A673 (cell line): ENCODE measurements at regions of chr16 and their contacts with region 1.

Region 1: DNA sequence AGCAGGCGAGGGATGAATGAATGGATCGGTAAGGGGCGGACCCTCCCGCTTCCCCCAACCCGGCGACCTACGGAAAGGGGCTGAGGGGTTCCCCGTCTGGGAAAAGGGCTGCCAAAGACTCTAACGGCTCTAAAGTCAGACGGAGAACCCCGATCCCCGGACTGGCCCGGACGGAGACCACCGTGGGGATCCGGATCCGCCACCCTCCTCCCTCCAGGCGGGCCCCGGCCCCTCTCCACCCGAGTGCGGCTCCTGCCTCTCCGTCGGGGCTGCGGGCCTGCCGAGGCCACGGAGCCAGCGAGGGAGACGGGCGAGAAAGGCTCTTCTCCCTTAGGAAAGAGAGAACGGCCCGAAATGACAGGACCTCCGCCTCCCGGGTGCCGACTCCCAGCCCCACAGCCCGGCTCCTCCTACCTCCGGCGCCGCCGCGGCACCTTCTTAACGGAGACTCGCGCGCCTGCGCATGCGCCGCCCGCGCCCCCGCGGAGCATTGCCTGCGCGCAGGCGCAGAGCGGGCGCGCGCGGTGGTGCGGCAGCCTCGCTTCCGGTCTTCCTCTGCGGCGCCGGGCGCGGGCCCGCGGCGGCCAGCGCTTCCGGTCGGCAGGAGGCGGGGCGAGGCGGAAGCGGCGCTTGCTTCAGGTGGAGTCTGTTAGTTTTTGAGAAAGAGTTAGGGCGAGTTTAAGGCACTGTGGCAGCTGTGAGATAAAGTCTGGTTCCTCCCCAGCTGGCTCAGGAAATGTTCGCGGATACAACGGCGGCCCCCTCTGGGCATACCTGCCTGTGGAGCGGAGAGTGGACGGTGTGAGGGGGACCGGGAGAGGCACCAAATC is at the start of gene SLX4:
- DNase-seq: peak; percentile 96
- H3K4me3 ChIP-seq: peak within 1 kb of the TSS; percentile 92
- H3K27ac ChIP-seq: peak within 1 kb of the TSS; percentile 85
- H3K4me1 ChIP-seq: peaks cover 8% of the 10 kb centered on the region
- H3K27me3 ChIP-seq: no peaks in the 10 kb centered on the region
- CTCF ChIP-seq: no peak
- total RNA-seq, gene SLX4: 15.1 and 16.1 TPM in 2 replicates

Region 2: GRCh38 chr16:2911580-2912329 is 699.6 kb before region 1 on chr16 and contains the start of gene FLYWCH1:
- CTCF ChIA-PET with region 1: interaction called, 10 read pairs
- POLR2A ChIA-PET with region 1: no interaction called
- intact Hi-C with region 1: no loop called
- DNase-seq: peak; percentile 99
- H3K4me3 ChIP-seq: peak within 1 kb of the TSS; percentile 74
- H3K27ac ChIP-seq: peak within 1 kb of the TSS; percentile 75
- H3K4me1 ChIP-seq: peaks cover 25% of the 10 kb centered on the region
- H3K27me3 ChIP-seq: no peaks in the 10 kb centered on the region
- CTCF ChIP-seq: no peak
- total RNA-seq, gene FLYWCH1: 46.8 and 47.0 TPM in 2 replicates

Region 3: DNA sequence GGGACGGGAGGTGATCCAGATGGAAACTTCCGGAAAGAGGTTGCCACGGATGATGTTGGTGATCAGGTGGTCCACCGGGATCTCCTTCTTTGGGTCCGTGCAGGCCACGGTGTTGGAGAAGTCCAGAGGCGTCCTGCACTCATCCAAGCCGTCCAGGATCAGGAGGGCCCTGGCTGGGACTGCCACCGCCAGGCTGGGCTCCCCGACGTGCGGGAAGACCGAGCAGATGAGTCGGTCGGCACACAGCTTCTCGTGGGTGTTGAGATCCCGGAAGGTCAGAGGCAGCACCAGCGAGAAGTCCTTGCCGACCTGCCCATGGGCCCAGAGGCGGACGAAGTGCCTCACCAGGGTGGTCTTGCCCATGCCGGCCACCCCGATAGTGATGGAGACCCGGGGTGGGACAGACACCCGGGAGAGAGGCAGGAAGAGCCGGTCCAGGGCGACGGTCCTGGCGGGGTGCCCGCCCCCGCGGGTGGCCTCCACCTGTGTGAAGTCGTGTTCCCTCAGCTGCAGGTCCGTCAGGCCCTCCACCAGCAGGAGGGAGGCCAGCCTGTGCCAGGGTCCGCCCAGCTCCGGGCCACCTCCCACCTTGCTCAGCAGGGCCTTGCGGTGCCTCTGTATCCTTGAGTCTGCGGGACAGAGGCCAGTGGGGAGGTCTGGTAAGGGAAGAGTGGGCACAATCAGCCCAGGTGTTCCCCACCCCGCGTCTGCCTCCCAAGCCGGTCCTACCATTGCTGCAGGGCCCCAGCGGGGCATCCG is 47.1 kb before region 1 on chr16:
- CTCF ChIA-PET with region 1: no interaction called
- POLR2A ChIA-PET with region 1: no interaction called
- intact Hi-C with region 1: no loop called
- DNase-seq: no peak
- H3K4me3 ChIP-seq: no peak overlapping the region
- H3K27ac ChIP-seq: no peak overlapping the region
- H3K4me1 ChIP-seq: no peaks in the 10 kb centered on the region
- H3K27me3 ChIP-seq: no peaks in the 10 kb centered on the region
- CTCF ChIP-seq: no peak